Activated naive CD4-positive, alpha-beta T cell treated with anti-CD3 and anti-CD28 coated beads for 36 hours (primary cell): ENCODE measurements at regions of chr1 and their contacts with region 1.

Region 1: DNA sequence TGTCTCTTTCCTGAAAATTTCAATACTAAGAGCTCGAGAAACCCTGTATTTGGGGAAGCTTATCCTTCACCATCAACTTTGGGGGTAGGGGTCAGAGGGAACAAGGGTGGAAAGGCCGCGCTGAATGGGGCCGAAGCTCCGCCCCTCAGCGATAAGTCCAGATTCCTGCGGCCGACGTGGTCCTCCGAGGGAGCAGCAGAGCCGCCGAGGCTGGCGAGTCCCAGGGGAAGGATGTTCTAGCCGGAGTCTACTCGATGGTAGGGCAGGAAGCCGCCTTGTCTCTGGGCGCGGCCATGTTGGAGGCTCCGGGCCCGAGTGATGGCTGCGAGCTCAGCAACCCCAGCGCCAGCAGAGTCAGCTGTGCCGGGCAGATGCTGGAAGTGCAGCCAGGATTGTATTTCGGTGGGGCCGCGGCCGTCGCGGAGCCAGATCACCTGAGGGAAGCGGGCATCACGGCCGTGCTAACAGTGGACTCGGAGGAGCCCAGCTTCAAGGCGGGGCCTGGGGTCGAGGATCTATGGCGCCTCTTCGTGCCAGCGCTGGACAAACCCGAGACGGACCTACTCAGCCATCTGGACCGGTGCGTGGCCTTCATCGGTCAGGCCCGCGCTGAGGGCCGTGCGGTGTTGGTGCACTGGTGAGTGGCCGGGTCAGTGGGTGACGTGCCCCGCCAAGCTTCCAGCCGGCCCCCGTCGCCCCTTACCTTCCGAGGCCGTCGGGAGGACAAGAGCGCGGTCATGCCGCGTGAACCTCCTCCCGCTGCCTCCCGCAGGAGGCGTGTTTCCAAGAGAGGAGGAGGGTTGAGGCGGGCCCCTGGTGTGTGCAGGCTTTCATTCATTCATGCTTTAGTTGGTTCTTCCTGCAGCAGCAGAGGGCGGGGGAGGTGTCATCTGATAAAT is at the start of gene DUSP12:
- DNase-seq: peak; percentile 94
- H3K4me3 Mint-ChIP-seq: peak within 1 kb of the TSS; percentile 98
- H3K27ac Mint-ChIP-seq: peak within 1 kb of the TSS; percentile 98
- H3K4me1 Mint-ChIP-seq: peaks cover 45% of the 10 kb centered on the region
- H3K27me3 Mint-ChIP-seq: no peaks in the 10 kb centered on the region
- total RNA-seq, gene DUSP12: 28.2 to 28.4 TPM

Region 2: DNA sequence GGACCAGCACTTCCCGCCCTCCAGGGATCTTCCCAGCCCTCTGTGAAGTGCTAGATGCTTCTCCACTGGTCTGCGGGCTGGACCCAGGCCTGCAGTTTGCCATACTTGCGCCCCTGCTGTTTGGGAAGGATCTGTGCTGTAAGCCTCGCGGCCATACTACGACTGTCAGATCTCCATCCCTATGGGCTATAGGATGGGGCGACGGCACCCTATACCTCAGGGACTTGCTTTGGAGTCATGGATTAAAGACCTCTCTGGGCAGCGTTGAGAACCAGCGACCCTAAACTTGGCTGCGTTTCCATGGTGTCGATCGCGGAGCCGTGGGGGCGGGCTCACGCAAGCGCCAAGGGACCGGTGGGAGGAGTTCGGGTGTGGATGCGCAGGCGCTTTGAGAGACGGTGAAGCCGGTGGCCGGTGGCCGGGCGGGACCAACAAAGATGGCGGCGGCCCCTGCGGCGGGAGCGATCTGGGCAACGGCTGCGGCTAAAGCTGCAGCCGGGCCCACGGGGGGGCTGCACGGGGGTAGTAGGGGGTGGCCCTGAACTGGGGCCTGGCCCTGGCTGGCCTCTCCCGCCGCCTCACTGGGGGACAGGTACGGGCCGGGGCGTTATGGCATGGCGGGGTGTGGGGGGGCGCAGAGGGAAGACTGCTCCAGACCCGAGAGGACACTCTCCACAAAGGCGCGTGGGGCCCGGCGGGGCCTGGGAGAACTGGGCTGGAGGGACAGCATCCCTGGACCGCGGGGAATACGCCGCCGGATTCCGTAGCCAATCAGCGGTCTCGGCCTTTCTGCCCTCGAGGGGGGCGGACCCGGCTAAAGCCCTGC is 590.5 kb before region 1 on chr1 and contains the start of gene USP21:
- CTCF ChIA-PET with region 1: no interaction called
- intact Hi-C with region 1: no loop called
- DNase-seq: peak; percentile 94
- H3K4me3 Mint-ChIP-seq: peak within 1 kb of the TSS; percentile 82
- H3K27ac Mint-ChIP-seq: peak within 1 kb of the TSS; percentile 86
- H3K4me1 Mint-ChIP-seq: peaks cover 58% of the 10 kb centered on the region
- H3K27me3 Mint-ChIP-seq: no peaks in the 10 kb centered on the region
- total RNA-seq, gene USP21: 35.7 to 36.1 TPM

Region 3: DNA sequence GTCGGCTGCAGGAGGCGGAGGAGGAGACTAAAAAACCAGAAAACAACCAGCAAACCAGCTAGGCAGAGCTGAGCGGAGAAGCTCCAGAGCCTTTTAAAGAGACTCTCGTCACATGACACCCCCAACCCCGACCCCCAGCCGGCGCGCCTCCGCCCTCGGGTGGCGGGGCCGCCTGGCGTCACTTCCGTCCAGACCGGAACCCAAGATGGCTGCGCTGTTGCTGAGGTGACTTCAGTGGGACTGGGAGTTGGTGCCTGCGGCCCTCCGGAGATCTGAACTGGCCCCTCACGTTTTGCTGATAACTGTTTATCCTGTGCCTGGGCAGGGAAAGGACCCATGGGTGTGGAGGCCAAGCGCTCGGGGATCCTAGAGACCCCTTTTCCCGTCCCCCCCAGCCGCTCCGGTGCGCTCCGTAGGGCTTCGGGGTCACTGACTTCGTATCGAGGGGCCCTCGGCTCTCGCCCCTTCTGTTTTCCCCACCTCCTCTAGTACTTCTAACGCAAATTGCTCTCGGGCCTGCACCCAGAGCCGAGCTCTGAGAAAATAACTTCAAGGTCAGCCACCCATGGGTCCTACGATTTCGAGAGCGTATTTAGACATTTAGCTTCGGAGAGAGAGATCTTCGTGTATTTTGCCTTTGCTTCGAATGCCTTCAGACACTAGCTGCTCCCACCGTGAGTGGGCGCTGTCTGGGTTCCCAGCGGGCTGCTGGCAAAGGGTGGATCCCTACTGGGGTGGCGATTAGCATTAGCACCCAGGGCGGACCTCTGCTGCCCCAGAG is 435.4 kb before region 1 on chr1 and contains the start of gene SDHC:
- CTCF ChIA-PET with region 1: no interaction called
- intact Hi-C with region 1: loop called (anchors 10 kb)
- DNase-seq: peak; percentile 89
- H3K4me3 Mint-ChIP-seq: peak within 1 kb of the TSS; percentile 97
- H3K27ac Mint-ChIP-seq: peak within 1 kb of the TSS; percentile 92
- H3K4me1 Mint-ChIP-seq: peaks cover 21% of the 10 kb centered on the region
- H3K27me3 Mint-ChIP-seq: no peaks in the 10 kb centered on the region
- total RNA-seq, gene SDHC: 201 TPM

Region 4: GRCh38 chr1:161399257-161399998 is 350.3 kb before region 1 on chr1:
- CTCF ChIA-PET with region 1: no interaction called
- intact Hi-C with region 1: loop called (anchors 10 kb)
- DNase-seq: peak; percentile 94
- H3K4me3 Mint-ChIP-seq: peak overlapping the region; percentile 96
- H3K27ac Mint-ChIP-seq: peak overlapping the region; percentile 100
- H3K4me1 Mint-ChIP-seq: peaks cover 25% of the 10 kb centered on the region
- H3K27me3 Mint-ChIP-seq: peaks cover 6% of the 10 kb centered on the region

Region 5: DNA sequence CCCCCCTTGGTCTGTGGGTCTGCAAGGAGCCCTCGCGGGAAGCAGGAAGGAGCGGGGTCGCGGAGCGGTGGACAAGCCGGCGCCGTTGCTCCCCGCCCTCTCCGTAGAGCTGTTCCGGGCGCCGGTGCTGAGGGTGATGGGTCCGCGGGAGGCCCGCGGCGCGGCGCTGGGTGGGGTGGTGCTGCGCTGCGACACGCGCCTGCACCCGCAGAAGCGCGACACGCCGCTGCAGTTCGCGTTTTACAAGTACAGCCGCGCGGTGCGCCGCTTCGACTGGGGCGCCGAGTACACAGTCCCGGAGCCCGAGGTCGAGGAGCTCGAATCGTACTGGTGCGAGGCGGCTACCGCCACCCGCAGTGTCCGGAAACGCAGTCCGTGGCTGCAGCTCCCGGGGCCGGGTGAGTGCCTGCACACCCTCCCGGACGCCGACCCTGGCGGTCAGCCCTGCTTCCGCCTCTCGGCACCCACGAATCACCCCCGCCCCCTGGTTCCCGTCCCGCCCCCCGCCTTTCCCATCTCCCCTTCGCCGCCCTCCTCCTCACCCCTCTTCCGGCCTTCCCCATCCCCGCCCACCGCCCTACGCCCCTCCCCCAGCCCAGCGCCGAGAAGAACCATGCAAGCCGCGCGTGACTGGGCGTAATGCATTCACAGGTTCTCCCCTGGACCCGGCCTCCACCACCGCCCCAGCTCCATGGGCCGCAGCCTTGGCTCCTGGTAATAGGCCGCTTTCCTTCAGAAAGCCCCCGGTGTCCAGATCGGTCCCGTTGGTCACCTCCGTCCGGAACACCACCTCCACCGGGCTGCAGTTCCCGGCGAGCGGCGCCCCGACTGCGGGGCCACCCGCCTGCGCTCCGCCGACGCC is 22.9 kb before region 1 on chr1:
- CTCF ChIA-PET with region 1: interaction called, 5 read pairs
- intact Hi-C with region 1: loop called (anchors 1 kb)
- DNase-seq: peak; percentile 69
- H3K4me3 Mint-ChIP-seq: peak overlapping the region; percentile 76
- H3K27ac Mint-ChIP-seq: no peak overlapping the region
- H3K4me1 Mint-ChIP-seq: peaks cover 44% of the 10 kb centered on the region
- H3K27me3 Mint-ChIP-seq: peaks cover 6% of the 10 kb centered on the region

Region 6: GRCh38 chr1:161738627-161739287 is 11.0 kb before region 1 on chr1:
- CTCF ChIA-PET with region 1: interaction called, 14 read pairs
- intact Hi-C with region 1: no loop called
- DNase-seq: peak; percentile 67
- H3K4me3 Mint-ChIP-seq: no peak overlapping the region
- H3K27ac Mint-ChIP-seq: no peak overlapping the region
- H3K4me1 Mint-ChIP-seq: peaks cover 19% of the 10 kb centered on the region
- H3K27me3 Mint-ChIP-seq: no peaks in the 10 kb centered on the region

Region 7: GRCh38 chr1:162113419-162113818 is 363.7 kb after region 1 on chr1:
- CTCF ChIA-PET with region 1: no interaction called
- intact Hi-C with region 1: no loop called
- DNase-seq: no peak
- H3K4me3 Mint-ChIP-seq: no peak overlapping the region
- H3K27ac Mint-ChIP-seq: no peak overlapping the region
- H3K4me1 Mint-ChIP-seq: no peaks in the 10 kb centered on the region
- H3K27me3 Mint-ChIP-seq: peaks cover 32% of the 10 kb centered on the region